Stomach (tissue), 19 donors: ENCODE measurements at regions of chr3 and their contacts with region 1.

Region 1: DNA sequence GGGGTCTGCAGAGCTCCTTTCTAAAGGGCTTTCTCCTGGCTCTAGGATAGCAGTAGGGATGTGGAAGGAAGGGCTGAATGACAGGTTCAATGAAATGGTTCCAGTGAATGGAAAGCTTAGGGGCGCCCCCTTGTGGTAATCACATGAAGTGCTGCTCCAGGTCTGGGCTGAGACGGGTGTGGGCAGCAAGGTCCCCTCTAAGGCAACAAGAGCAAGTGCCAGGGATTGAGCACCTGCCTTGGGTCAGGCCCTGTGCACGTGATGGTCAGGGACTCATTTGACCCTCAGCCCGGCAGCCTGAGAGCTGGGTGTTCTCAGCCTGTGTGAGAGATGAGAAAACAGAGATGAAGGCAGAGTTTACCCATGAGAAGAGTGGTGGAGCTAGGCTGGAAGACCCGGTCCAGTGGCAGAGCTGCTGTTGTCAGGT is 12.1 kb upstream of the CX3CR1 start:
- DNase-seq: peak; percentile 73 to 74
- H3K4me3 ChIP-seq: no peak overlapping the region
- H3K27ac ChIP-seq: no peak overlapping the region
- H3K4me1 ChIP-seq: peaks cover 0 to 27% (median 25%) of the 10 kb centered on the region in 4 donors
- H3K27me3 ChIP-seq: no peaks in the 10 kb centered on the region
- CTCF ChIP-seq: peak in 5 of 7 experiments; percentile 71 to 91 (median 90)
- EP300 ChIP-seq: no peak
- POLR2A ChIP-seq: no peak

Region 2: DNA sequence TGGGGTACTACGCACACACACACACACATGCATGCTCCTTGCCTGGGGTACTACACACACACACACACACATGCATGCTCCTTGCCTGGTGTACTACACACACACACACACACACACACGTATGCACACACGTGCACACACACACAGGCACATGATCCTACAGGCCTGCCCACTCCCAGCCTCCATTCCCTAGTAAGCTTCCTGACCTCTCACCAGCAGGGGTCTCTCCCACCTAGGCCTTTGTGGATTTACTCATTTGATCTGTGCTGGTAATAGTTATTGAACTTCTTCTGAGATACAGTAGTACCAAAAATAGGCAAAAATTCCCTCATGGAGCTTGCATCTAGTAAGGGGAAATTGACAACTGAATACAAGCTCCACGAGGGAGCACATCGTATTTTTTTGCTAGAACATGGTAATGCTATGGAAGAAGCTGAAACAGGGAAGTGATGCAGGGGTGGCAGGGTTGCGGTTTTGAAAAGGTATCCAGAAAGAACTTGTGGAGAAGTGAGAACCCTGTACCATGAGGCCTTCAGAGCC is 165.3 kb before region 1 on chr3:
- intact Hi-C with region 1: loop called (anchors 5 kb)
- DNase-seq: peak in 1 of 2 donors; percentile 82
- H3K4me3 ChIP-seq: no peak overlapping the region
- H3K27ac ChIP-seq: peak overlapping the region in 1 of 5 donors; percentile 77
- H3K4me1 ChIP-seq: peaks cover 20 to 34% (median 27%) of the 10 kb centered on the region in 4 donors
- H3K27me3 ChIP-seq: no peaks in the 10 kb centered on the region
- CTCF ChIP-seq: peak in 5 of 7 experiments; percentile 39 to 76 (median 52)
- EP300 ChIP-seq: no peak
- POLR2A ChIP-seq: no peak

Region 3: DNA sequence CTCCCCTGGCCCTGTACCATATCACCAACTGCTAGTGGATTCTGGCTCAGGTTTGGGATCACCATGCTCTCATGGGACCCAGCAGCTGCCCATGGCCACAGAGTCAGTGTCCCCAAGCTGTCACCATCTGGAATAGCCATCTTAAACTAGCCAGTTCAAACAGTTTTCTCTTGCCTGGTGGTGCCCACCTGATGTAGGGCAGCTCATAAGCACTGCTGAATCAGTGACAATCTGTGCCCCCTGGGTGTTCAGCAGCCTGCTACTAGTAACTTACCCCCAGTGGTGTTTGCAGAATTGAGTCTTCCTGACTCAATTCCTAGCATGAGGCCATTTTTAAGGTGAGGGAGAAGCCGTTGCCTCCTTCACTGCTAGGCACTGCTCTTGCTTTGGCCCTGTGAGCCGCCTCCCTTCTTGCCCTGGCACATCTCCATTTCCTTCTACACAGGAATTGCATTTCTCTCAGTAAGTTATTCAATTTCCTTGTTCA is 122.5 kb after region 1 on chr3:
- intact Hi-C with region 1: no loop called
- DNase-seq: peak in 1 of 2 donors; percentile 35
- H3K4me3 ChIP-seq: no peak overlapping the region
- H3K27ac ChIP-seq: peak overlapping the region in 4 of 5 donors; percentile 13 to 55 (median 52)
- H3K4me1 ChIP-seq: peaks cover 6 to 30% (median 18%) of the 10 kb centered on the region in 4 donors
- H3K27me3 ChIP-seq: no peaks in the 10 kb centered on the region
- CTCF ChIP-seq: no peak
- EP300 ChIP-seq: no peak
- POLR2A ChIP-seq: no peak

Region 4: DNA sequence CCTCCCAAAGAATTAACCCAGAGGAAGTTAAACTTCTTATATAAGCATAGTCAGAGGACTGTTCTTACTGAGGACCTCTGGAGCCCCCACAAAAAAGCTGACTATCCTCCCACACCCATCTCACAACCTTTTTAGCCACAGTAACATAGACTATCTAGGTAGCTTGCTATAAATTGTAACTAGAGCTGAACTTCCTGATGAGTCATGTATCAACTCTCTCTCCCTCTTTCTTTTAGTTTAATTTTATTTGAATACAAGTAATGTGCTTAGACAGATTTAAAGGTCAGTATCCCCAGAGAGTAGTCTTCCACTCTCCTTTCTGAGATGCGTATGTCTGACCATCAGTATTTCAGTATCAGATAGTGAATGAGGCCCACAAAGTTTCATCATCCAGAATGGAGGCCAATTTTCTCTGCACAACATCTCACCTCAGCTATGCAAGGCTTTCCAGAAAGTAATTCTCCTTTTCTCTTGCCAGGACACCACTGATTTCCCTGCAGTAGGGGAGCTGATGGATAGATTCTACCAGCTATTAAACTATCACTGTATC is 413.5 kb after region 1 on chr3:
- intact Hi-C with region 1: no loop called
- DNase-seq: no peak
- H3K4me3 ChIP-seq: no peak overlapping the region
- H3K27ac ChIP-seq: no peak overlapping the region
- H3K4me1 ChIP-seq: no peaks in the 10 kb centered on the region
- H3K27me3 ChIP-seq: no peaks in the 10 kb centered on the region
- CTCF ChIP-seq: no peak
- EP300 ChIP-seq: no peak
- POLR2A ChIP-seq: no peak